GM13977 (cell line): ENCODE measurements at regions of chr1 and their contacts with region 1.

Region 1: GRCh38 chr1:203480525-203481084 is 5.0 kb downstream of the PRELP start:
- DNase-seq: no peak
- CTCF ChIP-seq: no peak

Region 2: DNA sequence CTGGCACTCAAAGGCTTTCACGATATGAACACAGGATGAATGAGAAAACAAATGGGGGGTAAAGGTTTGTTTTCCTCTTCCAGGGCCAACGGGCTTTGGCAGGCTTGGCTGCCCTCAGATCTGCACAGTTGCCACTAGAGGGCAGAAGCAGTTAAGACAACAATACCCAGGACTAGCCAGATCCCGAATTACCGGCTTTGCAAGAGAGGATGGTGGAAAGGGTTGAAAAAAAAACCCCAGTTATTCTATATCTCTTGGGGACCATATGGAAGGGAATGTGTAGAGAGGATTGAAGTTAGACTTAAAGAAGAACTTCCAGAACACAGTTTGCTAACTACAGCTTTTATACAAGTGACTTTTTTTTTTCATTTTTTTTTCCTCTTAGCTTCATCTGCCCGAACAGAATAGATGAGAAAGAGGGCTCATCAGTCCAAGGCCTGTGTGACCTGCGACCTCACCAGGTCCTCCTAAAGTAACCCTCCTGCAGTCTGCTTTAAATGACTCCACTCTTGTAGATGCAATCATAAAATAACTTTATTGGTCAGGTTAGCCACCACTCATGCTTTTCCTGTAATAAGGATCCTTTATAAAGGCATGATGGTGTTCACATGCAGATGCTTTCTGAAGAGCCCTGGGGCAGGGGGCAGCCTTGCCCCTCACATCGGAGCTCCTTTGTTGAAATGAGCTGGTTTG is 140.3 kb before region 1 on chr1:
- in situ Hi-C with region 1: loop called (anchors 10 kb)
- DNase-seq: peak; percentile 89
- CTCF ChIP-seq: peak; percentile 93

Region 3: DNA sequence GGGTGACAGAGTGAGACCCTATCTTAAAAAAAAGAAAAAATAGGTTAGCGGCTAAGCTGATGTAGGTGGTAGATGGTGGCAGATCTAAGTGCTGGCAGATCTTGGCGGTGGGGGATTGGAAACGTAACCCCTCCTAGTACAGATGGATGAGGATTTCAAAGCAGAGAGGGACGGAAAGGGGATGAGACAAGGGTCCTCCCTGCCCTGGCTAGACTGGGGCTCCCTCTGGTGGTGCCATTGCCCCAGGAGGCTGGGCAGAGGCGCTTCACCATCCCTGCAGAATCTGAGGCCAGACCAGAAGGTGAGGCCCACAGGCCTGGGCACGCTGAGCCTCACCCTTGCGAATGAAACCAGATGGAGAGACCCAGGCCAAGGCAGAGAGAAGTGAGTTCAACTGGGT is 886.1 kb after region 1 on chr1:
- in situ Hi-C with region 1: no loop called
- DNase-seq: no peak
- CTCF ChIP-seq: peak; percentile 63